ENCODE measurements at regions of chrX and their contacts with region 1.

Region 1: DNA sequence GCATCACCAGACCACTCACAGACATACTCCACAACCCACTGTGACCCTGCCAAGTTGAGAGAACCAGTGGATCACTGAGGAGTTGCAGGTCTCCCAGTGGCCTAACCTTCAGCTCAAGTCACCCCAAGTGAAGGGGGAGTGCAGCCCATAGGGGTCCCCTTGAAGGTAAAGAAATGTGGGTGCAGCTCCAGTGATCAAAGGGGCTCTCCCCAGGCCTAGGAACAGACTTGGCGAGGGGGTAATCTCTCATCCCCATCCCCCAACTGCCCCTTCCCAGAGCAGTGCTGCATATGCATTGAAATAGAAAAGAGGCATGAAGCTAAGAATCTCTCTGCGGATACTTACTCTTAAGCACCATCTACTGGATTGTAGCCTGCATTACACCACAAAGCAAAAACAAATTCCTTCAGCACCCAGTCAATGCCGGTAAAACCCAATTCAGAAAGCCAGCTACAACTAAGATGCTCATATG is 27.0 kb downstream of the MAGEE1 start:
- DNase-seq: no peak
- CTCF ChIP-seq: peak; percentile 71

Region 2: GRCh38 chrX:76279000-76279399 is 175.5 kb before region 1 on chrX:
- in situ Hi-C with region 1: loop called (anchors 25 kb)
- DNase-seq: peak; percentile 40
- CTCF ChIP-seq: peak; percentile 83

Measured in GM13977 (cell line).